Vagina (tissue), 2 donors: ENCODE measurements at regions of chr1 and their contacts with region 1.

Region 1: GRCh38 chr1:110203021-110203661 is 7.0 kb upstream of the KCNC4 start:
- DNase-seq: no peak
- H3K4me3 ChIP-seq: no peak overlapping the region
- H3K27ac ChIP-seq: no peak overlapping the region
- H3K4me1 ChIP-seq: peaks cover 5% of the 10 kb centered on the region
- H3K27me3 ChIP-seq: no peaks in the 10 kb centered on the region
- CTCF ChIP-seq: peak; percentile 67 to 80 (median 77)
- POLR2A ChIP-seq: no peak

Region 2: GRCh38 chr1:110312188-110313121 is 109.3 kb after region 1 on chr1:
- intact Hi-C with region 1: loop called (anchors 2 kb)
- DNase-seq: no peak
- H3K4me3 ChIP-seq: no peak overlapping the region
- H3K27ac ChIP-seq: no peak overlapping the region
- H3K4me1 ChIP-seq: no peaks in the 10 kb centered on the region
- H3K27me3 ChIP-seq: no peaks in the 10 kb centered on the region
- CTCF ChIP-seq: peak; percentile 92 to 99 (median 98)
- POLR2A ChIP-seq: no peak